ENCODE measurements at regions of chr7 and their contacts with region 1.

Region 1: DNA sequence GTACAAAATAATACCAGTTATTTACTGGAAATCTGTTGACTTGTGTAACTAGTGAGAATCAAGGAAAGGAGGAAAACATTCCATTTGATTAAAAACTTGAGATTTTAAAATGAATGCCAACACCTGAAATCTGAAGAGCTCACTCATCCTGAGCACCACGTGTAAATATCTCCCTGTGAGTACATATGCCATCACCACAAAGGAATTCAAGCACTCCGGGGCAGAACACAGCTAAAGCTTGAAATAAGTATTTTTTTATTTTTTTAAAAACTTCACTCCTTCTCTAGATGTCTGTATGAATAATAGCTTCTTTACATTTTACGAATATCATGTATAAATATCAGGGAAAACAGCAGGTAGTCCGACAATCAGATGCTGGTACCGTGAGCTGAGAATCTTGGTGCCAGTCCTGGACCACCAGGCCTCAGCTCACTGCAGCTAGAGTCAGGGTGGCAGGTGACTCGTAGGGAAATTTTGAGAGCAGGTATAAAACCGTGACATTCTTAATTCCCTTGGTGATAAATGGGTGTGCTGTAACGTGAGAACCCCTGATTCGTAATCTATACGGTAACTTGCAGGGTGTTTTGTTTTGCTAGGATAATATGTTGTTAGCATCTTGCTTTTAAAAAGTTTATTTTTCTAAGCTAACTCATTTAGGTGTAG is 12.7 kb downstream of the LMTK2 start:
- DNase-seq: peak; percentile 24
- H3K4me3 ChIP-seq: no peak overlapping the region
- H3K27me3 ChIP-seq: no peaks in the 10 kb centered on the region
- CTCF ChIP-seq: no peak

Region 2: DNA sequence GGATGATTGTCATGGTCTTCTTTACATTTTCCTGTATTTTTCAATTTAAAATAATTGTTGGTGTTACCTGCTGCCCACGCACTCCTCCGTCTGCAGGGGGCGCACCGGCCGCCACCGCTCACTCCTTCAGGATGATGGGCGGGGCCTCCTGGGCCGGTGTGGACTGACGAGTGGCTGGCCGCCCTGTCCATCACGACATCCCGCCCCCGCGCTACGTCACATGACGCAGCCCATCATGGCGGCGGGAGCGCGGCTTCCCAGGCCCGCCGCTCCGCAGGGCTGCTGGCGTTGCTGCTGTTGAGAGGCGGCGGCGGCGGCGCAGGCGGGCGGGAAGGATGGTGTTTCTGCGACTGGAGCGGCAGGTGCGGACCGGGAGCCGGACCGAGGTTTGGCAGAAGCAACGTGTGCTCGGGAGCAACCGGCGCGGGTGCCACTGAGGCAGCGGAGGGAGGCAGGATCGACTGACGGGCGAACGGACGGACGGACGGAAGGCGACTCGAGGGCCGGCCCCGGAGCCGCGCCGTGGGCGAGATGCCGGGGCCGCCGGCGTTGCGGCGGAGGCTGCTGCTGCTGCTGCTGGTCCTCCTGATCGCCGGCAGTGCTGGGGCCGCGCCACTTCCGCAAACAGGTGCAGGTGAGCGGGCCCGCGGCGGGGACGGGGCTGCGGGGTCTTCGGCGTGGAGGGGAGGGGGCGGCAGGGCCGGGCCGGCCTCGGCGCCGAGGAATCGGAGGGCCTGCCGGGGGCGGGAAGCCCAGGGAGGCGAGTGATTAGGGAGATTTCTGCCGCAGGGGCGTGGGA is 12.5 kb before region 1 on chr7 and contains the start of gene LMTK2:
- CTCF ChIA-PET with region 1: interaction called, 11 read pairs
- POLR2A ChIA-PET with region 1: interaction called, 4 read pairs
- DNase-seq: peak; percentile 38
- H3K4me3 ChIP-seq: peak within 1 kb of the TSS; percentile 89
- H3K27me3 ChIP-seq: no peaks in the 10 kb centered on the region
- CTCF ChIP-seq: peak; percentile 96
- polyA plus RNA-seq, gene LMTK2: 3.0 and 3.8 TPM in 2 replicates

Measured in BJ (cell line).